T-cell (primary cell): ENCODE measurements at regions of chr1 and their contacts with region 1.

Region 1: GRCh38 chr1:44855742-44856141 is 12.7 kb upstream of the PTCH2 start:
- DNase-seq: no peak
- ATAC-seq: no peak
- H3K4me3 ChIP-seq: no peak overlapping the region
- H3K4me3 Mint-ChIP-seq: no peak overlapping the region
- H3K27ac ChIP-seq: no peak overlapping the region
- H3K27ac Mint-ChIP-seq: no peak overlapping the region
- H3K4me1 ChIP-seq: no peaks in the 10 kb centered on the region
- H3K4me1 Mint-ChIP-seq: peaks cover 0 to 5% (median 0%) of the 10 kb centered on the region in 3 donors
- H3K27me3 ChIP-seq: no peaks in the 10 kb centered on the region
- H3K27me3 Mint-ChIP-seq: no peaks in the 10 kb centered on the region

Region 2: GRCh38 chr1:43315963-43316737 is 1539.6 kb before region 1 on chr1:
- CTCF ChIA-PET with region 1: interaction called in 1 of 2 experiments, 3 read pairs
- POLR2A ChIA-PET with region 1: interaction called in 1 of 2 experiments, 15 read pairs
- DNase-seq: no peak
- ATAC-seq: no peak
- H3K4me3 ChIP-seq: no peak overlapping the region
- H3K4me3 Mint-ChIP-seq: no peak overlapping the region
- H3K27ac ChIP-seq: no peak overlapping the region
- H3K27ac Mint-ChIP-seq: no peak overlapping the region
- H3K4me1 ChIP-seq: no peaks in the 10 kb centered on the region
- H3K4me1 Mint-ChIP-seq: no peaks in the 10 kb centered on the region
- H3K27me3 ChIP-seq: peaks cover 0 to 5% of the 10 kb centered on the region in 2 experiments
- H3K27me3 Mint-ChIP-seq: no peaks in the 10 kb centered on the region

Region 3: DNA sequence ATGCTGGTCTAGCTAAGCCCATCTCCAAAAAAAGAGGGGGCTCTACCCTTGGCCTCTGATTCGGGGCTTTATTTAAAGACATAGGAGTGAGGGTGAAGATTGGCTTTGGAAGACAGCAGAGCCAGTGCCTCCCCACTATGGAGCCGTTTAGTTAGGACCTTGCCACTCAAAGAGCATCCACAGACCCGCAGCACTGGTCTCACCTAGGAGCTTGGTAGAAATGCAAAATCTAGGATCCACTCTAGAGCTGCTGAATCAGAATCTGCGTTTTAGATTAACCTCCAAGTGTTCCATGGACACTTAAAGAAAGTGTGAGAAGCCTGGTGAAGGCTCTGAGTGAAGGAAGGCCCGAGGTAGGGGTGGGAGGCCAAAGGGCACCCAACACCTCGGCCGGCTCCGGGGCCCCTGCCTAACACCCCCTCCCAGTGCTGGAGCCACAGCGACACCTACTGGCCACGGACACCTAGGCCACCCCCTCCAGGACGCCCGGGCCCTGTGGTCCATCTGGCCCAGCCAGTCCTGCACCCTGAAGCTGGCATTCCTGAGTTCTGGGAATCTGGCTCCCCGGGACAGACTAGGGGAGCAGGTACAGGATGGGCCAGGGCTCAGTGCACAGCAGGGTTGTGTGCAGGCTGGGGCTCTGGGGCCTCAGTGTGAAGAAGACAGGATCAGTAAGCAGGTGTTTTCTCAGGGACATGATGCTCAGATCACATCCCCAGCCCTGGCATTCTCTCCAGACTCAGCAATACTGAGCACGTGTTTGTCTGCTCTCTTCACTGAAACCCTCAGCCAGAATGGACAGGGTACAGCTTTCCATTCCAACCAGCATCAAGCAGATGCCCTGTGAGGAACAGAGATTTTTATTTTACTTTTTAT is 260.6 kb before region 1 on chr1:
- CTCF ChIA-PET with region 1: no interaction called
- POLR2A ChIA-PET with region 1: no interaction called
- DNase-seq: peak; percentile 15 to 85 (median 65)
- ATAC-seq: peak; percentile 79 to 90 (median 84)
- H3K4me3 ChIP-seq: no peak overlapping the region
- H3K4me3 Mint-ChIP-seq: no peak overlapping the region
- H3K27ac ChIP-seq: no peak overlapping the region
- H3K27ac Mint-ChIP-seq: no peak overlapping the region
- H3K4me1 ChIP-seq: peaks cover 0 to 4% of the 10 kb centered on the region in 2 experiments
- H3K4me1 Mint-ChIP-seq: no peaks in the 10 kb centered on the region
- H3K27me3 ChIP-seq: peaks cover 0 to 20% of the 10 kb centered on the region in 2 experiments
- H3K27me3 Mint-ChIP-seq: peaks cover 0 to 12% of the 10 kb centered on the region in 2 donors

Region 4: DNA sequence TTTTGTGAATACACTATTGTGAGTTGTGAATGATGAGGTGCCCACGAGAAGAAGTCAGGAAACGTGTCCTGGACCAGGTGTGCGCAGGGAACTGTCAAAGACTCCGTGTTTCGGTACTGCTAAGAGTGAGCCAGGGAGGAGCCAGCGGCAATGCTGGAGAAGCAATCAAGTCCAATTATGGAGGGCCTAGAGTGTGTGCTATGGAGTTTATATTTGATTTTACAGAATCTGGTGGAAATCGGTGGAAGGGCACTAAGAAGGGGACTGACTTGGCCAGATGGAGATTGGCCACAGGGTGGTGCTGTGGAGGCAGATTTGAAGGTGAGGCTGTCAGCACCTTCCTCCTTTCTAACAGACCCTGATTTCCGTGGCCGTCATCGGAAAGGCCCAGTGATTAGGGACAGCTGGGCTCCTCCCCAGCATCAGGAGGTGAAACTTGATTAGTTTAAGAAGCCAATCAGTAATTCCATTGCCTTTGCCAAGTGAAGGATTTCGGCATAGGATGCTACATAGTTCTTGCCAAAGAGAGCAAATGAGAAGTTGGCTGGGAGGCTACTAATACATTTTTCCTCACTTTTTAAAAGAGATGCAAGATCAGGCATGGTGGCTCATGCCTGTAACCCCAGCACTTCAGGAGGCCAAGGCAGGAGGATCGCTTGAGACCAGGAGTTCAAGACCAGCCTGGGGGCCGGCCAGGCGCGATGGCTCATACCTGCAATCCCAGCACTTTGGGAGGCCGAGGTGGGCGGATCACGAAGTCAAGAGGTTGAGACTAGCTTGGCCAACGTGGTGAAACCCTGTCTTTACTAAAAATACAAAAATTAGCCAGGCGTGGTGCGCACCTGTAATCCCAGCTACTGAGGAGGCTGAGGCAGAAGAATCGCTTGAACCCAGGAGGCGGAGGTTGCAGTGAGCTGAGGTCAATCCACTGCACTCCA is 19.7 kb before region 1 on chr1:
- CTCF ChIA-PET with region 1: no interaction called
- POLR2A ChIA-PET with region 1: no interaction called
- DNase-seq: peak; percentile 60 to 89 (median 81)
- ATAC-seq: peak; percentile 89 to 96 (median 95)
- H3K4me3 ChIP-seq: no peak overlapping the region
- H3K4me3 Mint-ChIP-seq: peak overlapping the region in 1 of 3 donors; percentile 2
- H3K27ac ChIP-seq: no peak overlapping the region
- H3K27ac Mint-ChIP-seq: peak overlapping the region in 1 of 2 donors; percentile 58
- H3K4me1 ChIP-seq: peaks cover 0 to 8% of the 10 kb centered on the region in 2 experiments
- H3K4me1 Mint-ChIP-seq: peaks cover 8 to 10% (median 8%) of the 10 kb centered on the region in 3 donors
- H3K27me3 ChIP-seq: peaks cover 0 to 22% of the 10 kb centered on the region in 2 experiments
- H3K27me3 Mint-ChIP-seq: peaks cover under 1 to 6% of the 10 kb centered on the region in 2 donors